ENCODE measurements at regions of chr1 and their contacts with region 1.

Region 1: DNA sequence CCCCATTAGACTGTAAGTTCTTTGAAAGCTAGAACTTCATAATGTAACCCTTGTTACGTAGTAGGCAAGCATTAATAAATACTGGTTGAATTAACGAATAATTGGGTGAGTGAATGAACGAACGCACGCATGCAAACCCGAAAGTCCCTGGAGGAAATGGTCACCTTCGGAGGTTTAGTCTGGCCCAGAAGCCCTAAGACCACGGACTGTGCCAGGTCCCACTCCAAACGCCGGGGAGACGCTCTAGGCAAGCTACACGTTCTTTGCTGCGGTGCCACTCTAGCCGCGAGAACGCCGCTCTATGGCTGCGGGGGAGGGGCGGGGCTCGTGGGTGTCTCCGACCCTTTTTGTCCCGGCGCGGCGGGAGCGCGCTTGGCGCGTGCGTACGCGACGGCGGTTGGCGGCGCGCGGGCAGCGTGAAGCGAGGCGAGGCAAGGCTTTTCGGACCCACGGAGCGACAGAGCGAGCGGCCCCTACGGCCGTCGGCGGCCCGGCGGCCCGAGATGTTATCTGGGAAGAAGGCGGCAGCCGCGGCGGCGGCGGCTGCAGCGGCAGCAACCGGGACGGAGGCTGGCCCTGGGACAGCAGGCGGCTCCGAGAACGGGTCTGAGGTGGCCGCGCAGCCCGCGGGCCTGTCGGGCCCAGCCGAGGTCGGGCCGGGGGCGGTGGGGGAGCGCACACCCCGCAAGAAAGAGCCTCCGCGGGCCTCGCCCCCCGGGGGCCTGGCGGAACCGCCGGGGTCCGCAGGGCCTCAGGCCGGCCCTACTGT is at the start of gene KDM1A:
- DNase-seq: peak; percentile 92 to 100 (median 94)
- ATAC-seq: peak; percentile 97
- H3K4me3 ChIP-seq: peak within 1 kb of the TSS; percentile 94
- H3K27ac ChIP-seq: peak within 1 kb of the TSS; percentile 91
- H3K4me1 ChIP-seq: peaks cover 7 to 8% of the 10 kb centered on the region in 2 experiments; a peak in 4 of 5 replicates
- H3K27me3 ChIP-seq: no peaks in the 10 kb centered on the region
- CTCF ChIP-seq: peak; percentile 48 to 60 (median 53)
- EP300 ChIP-seq: peak; percentile 84
- POLR2A ChIP-seq: peak; percentile 97
- RAD21 ChIP-seq: no peak
- polyA plus RNA-seq, gene KDM1A: 59.2 to 70.3 TPM

Region 2: GRCh38 chr1:22341791-22342605 is 677.3 kb before region 1 on chr1:
- CTCF ChIA-PET with region 1: no interaction called
- POLR2A ChIA-PET with region 1: no interaction called
- in situ Hi-C with region 1: no loop called
- intact Hi-C with region 1: no loop called
- DNase-seq: peak in 2 of 4 experiments; percentile 50 to 67
- ATAC-seq: peak; percentile 74
- H3K4me3 ChIP-seq: no peak overlapping the region
- H3K27ac ChIP-seq: no peak overlapping the region
- H3K4me1 ChIP-seq: peaks cover 0 to 20% of the 10 kb centered on the region in 2 experiments; a peak in 3 of 5 replicates
- H3K27me3 ChIP-seq: peaks cover 54 to 82% of the 10 kb centered on the region in 2 experiments
- CTCF ChIP-seq: no peak
- EP300 ChIP-seq: no peak
- POLR2A ChIP-seq: no peak
- RAD21 ChIP-seq: 0 out of 4 replicates have a peak, but pooled peaks of 1 of the 2 experiments have one; percentile 7

Region 3: DNA sequence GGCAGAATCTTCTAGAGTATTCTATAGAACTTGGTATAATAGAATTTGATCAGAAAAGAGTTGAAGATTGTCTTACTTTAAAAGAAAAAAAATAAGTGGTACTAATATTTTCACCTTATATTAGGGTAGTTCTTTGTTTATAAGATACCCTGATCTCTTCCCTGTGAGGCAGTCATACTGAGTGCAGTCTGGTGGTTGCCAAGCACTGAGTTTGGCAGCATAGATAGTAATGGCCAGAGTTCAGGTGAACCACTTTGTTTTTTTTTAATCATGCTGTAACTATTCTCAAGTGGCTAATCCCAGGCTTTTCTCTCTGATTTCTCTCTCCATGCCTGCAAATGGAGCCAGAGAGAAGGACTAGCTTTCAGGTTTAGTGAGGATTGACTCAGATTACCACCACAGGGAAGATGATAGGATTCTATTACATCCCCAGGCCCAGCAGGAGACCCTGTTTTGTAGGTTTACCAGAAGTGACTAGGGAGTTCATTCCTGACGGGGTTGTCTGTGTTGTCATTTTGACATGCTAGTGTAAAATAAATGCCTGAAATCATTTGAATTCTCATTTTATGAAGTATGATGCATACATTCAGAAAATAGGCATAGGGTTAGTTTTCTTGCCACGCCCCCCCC is 16.7 kb after region 1 on chr1:
- CTCF ChIA-PET with region 1: no interaction called
- POLR2A ChIA-PET with region 1: interaction called, 22 read pairs
- in situ Hi-C with region 1: no loop called
- intact Hi-C with region 1: no loop called
- DNase-seq: no peak
- ATAC-seq: no peak
- H3K4me3 ChIP-seq: no peak overlapping the region
- H3K27ac ChIP-seq: no peak overlapping the region
- H3K4me1 ChIP-seq: peaks cover 0 to 7% of the 10 kb centered on the region in 2 experiments; a peak in 1 of 5 replicates
- H3K27me3 ChIP-seq: no peaks in the 10 kb centered on the region
- CTCF ChIP-seq: no peak
- EP300 ChIP-seq: no peak
- POLR2A ChIP-seq: no peak
- RAD21 ChIP-seq: no peak

Region 4: DNA sequence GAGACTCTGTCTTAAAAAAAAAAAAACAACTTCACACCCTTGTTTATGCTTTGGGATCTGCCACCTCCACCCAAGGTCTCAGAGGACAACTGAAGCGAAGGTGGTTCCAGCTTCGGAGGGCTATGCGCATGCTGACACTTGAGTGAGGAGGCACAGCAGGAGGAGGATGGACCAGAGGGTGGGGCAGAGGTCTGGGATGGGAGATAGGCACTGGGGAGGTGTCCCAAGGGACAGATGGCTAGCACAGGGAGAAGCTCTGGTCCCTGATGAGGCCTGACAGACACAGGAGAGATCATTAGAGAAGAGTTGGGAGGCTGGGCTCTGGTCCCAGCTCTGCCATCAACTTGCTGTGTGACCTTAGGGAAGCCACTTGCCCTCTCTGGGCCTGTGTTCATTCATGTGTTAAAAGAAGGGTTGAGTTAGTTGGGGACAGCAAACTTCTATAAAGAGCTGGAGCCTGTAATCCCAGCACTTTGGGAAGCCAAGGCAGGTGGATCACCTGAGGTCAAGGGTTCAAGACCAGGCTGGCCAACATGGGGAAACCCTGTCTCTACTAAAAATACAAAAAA is 494.9 kb after region 1 on chr1:
- CTCF ChIA-PET with region 1: no interaction called
- POLR2A ChIA-PET with region 1: no interaction called
- in situ Hi-C with region 1: no loop called
- intact Hi-C with region 1: no loop called
- DNase-seq: peak; percentile 48 to 82 (median 64)
- ATAC-seq: no peak; the same call in 2 of the 3 replicates
- H3K4me3 ChIP-seq: no peak overlapping the region
- H3K27ac ChIP-seq: no peak overlapping the region
- H3K4me1 ChIP-seq: no peaks in the 10 kb centered on the region; a peak in 3 of 5 replicates
- H3K27me3 ChIP-seq: no peaks in the 10 kb centered on the region
- CTCF ChIP-seq: no peak
- EP300 ChIP-seq: no peak
- POLR2A ChIP-seq: no peak
- RAD21 ChIP-seq: no peak